ENCODE measurements at regions of chr3 and their contacts with region 1.

Region 1: DNA sequence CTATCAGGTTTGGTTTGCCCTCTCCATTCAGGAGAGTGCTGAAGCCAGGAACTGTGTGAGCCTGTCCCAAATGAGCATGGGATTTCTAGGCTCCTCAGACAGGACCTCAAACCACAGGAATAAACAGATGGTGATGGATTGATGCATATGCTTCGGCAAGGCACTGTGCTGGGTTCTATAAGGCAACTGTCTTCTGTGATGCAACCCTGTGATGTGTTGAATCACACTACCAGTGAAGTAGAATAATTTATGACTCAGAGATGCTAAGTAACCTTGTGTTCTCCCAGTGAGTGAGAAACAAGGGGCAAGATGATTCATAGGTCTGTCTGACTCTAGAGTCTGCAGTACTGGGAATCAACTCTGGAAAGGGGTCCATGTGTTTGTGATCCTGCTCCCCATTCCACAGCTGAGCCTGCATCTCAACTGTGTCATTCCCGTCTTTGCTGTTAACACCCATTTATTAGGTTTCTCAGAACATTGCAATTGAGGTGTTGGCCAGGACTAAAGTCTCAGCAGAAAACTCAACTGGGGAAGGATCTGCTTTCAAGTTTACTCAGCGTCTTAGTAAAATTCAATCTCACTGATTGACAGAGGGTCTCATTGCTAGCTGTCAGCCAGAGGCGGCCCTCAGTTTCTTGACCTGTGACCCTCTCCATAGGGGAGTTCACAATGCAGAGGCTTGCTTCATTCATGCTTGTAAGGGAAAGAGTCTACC is 510.1 kb upstream of the CFAP20DC start:
- DNase-seq: no peak
- H3K4me3 Mint-ChIP-seq: peak overlapping the region; percentile 1
- H3K27ac Mint-ChIP-seq: peak overlapping the region; percentile 89
- H3K4me1 Mint-ChIP-seq: peaks cover 25% of the 10 kb centered on the region
- H3K27me3 Mint-ChIP-seq: no peaks in the 10 kb centered on the region

Region 2: DNA sequence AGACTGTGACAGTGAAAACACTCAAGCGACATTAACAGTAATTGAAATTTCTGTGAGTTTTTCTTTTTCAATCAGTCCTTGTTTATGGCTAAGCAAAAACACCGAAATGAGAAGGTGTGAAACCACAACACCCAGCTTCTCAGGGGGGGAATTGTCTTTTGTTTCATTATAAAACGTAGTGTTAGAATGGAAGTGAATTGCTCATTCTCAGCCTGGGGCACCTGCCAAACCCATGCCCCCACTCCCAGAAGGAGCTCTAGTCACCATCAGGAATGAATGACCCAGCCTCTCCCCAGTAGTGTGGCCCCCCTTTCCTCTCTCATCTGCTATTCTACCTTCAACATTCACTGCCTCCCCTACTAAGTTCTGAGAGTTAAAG is 324.3 kb before region 1 on chr3:
- intact Hi-C with region 1: loop called (anchors 2 kb)
- DNase-seq: peak; percentile 76
- H3K4me3 Mint-ChIP-seq: peak overlapping the region; percentile 4
- H3K27ac Mint-ChIP-seq: peak overlapping the region; percentile 66
- H3K4me1 Mint-ChIP-seq: peaks cover 17% of the 10 kb centered on the region
- H3K27me3 Mint-ChIP-seq: no peaks in the 10 kb centered on the region

Measured in activated CD4-positive, alpha-beta T cell treated with anti-CD3 and anti-CD28 coated beads, Interleukin-2, amount 10 ng/mL, durations not matched to agents 24 days and 14 days (primary cell).